HEK293 (cell line): ENCODE measurements at regions of chr17 and their contacts with region 1.

Region 1: GRCh38 chr17:63773381-63774140 is at the start of gene CCDC47:
- H3K4me3 ChIP-seq: peak within 1 kb of the TSS; percentile 90
- H3K27ac ChIP-seq: peak within 1 kb of the TSS; percentile 91
- H3K4me1 ChIP-seq: no peaks in the 10 kb centered on the region; the same call in 1 of the 2 replicates
- CTCF ChIP-seq: no peak

Region 2: GRCh38 chr17:63741221-63742049 is 32.1 kb before region 1 on chr17 and contains the start of gene STRADA:
- CTCF ChIA-PET with region 1: no interaction called
- POLR2A ChIA-PET with region 1: interaction called, 35 read pairs
- H3K4me3 ChIP-seq: peak within 1 kb of the TSS; percentile 87
- H3K27ac ChIP-seq: peak within 1 kb of the TSS; percentile 95
- H3K4me1 ChIP-seq: peaks cover 6% of the 10 kb centered on the region; the same call in 1 of the 2 replicates
- CTCF ChIP-seq: no peak

Region 3: GRCh38 chr17:63785556-63785955 is 12.0 kb after region 1 on chr17:
- CTCF ChIA-PET with region 1: interaction called, 5 read pairs
- POLR2A ChIA-PET with region 1: interaction called, 40 read pairs
- H3K4me3 ChIP-seq: no peak overlapping the region
- H3K27ac ChIP-seq: no peak overlapping the region
- H3K4me1 ChIP-seq: no peaks in the 10 kb centered on the region; the same call in 1 of the 2 replicates
- CTCF ChIP-seq: no peak

Region 4: GRCh38 chr17:63798572-63799106 is 25.1 kb after region 1 on chr17:
- CTCF ChIA-PET with region 1: interaction called, 3 read pairs
- POLR2A ChIA-PET with region 1: interaction called, 18 read pairs
- H3K4me3 ChIP-seq: no peak overlapping the region
- H3K27ac ChIP-seq: no peak overlapping the region
- H3K4me1 ChIP-seq: no peaks in the 10 kb centered on the region
- CTCF ChIP-seq: no peak

Region 5: GRCh38 chr17:63827002-63827771 is 53.6 kb after region 1 on chr17 and contains the starts of genes FTSJ3 and PSMC5:
- CTCF ChIA-PET with region 1: interaction called, 3 read pairs
- POLR2A ChIA-PET with region 1: interaction called, 25 read pairs
- H3K4me3 ChIP-seq: peak within 1 kb of the TSS; percentile 74
- H3K27ac ChIP-seq: peak within 1 kb of the TSS; percentile 87
- H3K4me1 ChIP-seq: peaks cover 3% of the 10 kb centered on the region; the same call in 1 of the 2 replicates
- CTCF ChIP-seq: peak; percentile 98

Region 6: GRCh38 chr17:63834431-63835166 is 61.0 kb after region 1 on chr17:
- CTCF ChIA-PET with region 1: interaction called, 8 read pairs
- POLR2A ChIA-PET with region 1: interaction called, 10 read pairs
- H3K4me3 ChIP-seq: no peak overlapping the region
- H3K27ac ChIP-seq: 0 out of 2 replicates have a peak overlapping the region, but pooled peaks have one; percentile 1
- H3K4me1 ChIP-seq: peaks cover 7% of the 10 kb centered on the region
- CTCF ChIP-seq: peak; percentile 98

Region 7: GRCh38 chr17:63842540-63843386 is 69.2 kb after region 1 on chr17 and contains the start of gene SMARCD2:
- CTCF ChIA-PET with region 1: no interaction called
- POLR2A ChIA-PET with region 1: interaction called, 20 read pairs
- H3K4me3 ChIP-seq: peak within 1 kb of the TSS; percentile 93
- H3K27ac ChIP-seq: peak within 1 kb of the TSS; percentile 97
- H3K4me1 ChIP-seq: peaks cover 20% of the 10 kb centered on the region
- CTCF ChIP-seq: peak; percentile 55; the same call in 1 of the 2 replicates